Posterior vena cava (tissue), 2 donors: ENCODE measurements at regions of chr2 and their contacts with region 1.

Region 1: GRCh38 chr2:108701208-108701607 is 18.1 kb upstream of the RANBP2 start:
- DNase-seq: no peak

Region 2: DNA sequence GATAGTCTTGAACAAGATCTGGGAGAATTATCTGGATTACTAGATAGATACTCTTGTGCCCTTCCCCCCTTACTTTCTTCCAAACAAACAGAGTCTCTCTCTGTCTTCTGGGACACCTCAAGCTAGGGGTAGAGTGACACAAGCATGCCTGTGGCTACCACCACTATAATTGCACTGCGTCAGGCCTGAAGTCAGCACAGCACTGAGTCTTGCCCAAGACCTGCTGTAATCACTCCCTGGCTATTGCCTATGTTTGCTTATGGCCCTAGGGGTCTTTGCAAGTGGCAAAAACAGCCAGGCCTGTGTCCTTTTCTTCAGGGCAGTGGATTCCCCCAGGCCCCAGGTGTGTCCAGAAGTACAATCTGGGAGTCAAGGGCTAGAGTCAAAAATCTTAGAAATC is 608.3 kb before region 1 on chr2:
- intact Hi-C with region 1: no loop called
- DNase-seq: no peak

Region 3: GRCh38 chr2:108396845-108397244 is 304.4 kb before region 1 on chr2:
- intact Hi-C with region 1: no loop called
- DNase-seq: no peak

Region 4: GRCh38 chr2:108927936-108928659 is 226.9 kb after region 1 on chr2:
- intact Hi-C with region 1: no loop called
- DNase-seq: no peak

Region 5: GRCh38 chr2:109368798-109369197 is 667.6 kb after region 1 on chr2:
- intact Hi-C with region 1: loop called in 1 of 2 experiments (anchors 5 kb)
- DNase-seq: no peak